ENCODE measurements at regions of chr13 and their contacts with region 1.

Region 1: GRCh38 chr13:46831588-46832194 is 34.7 kb upstream of the ESD start:
- DNase-seq: no peak

Region 2: GRCh38 chr13:46852168-46852567 is 20.5 kb after region 1 on chr13:
- intact Hi-C with region 1: loop called in 1 of 2 experiments (anchors 2 kb)
- DNase-seq: no peak

Region 3: DNA sequence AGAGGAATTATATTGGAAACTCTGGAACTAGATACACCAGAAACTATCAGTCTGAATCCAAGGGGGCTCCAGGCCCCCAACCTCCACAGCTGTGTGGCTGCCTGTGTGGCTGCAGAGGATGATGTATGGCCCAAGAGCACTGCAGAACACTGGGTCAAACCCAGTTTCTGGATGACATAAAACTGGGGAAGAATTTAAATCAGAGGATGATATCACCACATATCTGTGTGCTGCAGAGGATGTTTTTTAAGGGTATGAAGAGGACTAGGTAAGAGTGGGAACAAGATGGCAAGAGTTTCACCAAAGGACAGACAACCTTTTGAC is 942.9 kb after region 1 on chr13:
- intact Hi-C with region 1: loop called in 1 of 2 experiments (anchors 10 kb)
- DNase-seq: no peak